ENCODE measurements at regions of chr1 and their contacts with region 1.

Region 1: DNA sequence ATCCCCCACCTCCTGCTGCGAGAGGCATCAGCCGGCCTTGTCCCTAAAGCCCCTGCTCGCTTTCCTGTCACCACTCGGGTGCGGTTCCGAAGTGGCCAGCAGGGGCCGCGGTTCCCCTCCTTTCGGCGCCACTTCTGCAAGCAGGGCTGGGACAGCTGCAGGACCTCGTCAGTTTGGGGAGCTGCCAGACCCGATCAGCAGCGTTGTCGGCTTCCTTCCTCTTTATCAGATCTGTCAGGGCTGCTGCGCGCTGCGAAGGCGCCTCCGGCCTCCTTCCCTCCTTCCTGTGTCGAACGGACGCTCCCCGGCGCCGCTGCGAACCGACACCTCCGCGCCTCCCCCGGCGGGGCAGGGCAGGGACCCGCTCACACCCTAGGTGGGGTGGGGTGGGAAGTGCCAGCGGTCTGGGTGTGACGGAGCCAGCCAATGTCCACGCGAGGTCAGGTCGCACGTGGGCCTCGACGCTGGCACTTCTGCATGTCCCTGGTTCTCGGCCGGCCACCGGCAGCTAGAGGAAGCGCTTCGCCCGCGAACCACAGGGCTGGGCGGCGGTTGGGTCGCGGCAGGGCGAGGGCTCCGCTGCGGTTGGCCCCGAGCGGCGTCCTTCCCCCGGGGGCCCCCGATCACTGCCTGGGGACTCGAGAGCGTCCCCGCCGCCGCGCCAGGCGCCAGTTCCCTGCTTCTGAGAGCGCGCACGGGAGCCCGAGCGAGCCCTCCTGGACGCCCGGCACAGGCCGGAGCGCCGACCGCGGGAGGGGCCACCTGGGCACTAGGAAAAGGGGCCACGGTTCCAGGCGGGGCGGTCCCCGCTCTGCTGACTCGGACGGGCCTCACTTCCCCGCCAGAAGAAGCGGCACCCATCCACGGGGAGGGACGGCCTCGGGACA is 81.8 kb downstream of the RUNX3 start:
- DNase-seq: peak; percentile 93 to 94
- ATAC-seq: peak; percentile 92 to 97 (median 95)
- H3K4me3 ChIP-seq: peak overlapping the region; percentile 13 to 61 (median 56)
- H3K27ac ChIP-seq: peak overlapping the region in 9 of 10 donors; percentile 33 to 86 (median 70)
- H3K4me1 ChIP-seq: peaks cover 0 to 32% (median 17%) of the 10 kb centered on the region in 9 donors
- H3K27me3 ChIP-seq: no peaks in the 10 kb centered on the region
- CTCF ChIP-seq: peak; percentile 86 to 98 (median 93)

Region 2: DNA sequence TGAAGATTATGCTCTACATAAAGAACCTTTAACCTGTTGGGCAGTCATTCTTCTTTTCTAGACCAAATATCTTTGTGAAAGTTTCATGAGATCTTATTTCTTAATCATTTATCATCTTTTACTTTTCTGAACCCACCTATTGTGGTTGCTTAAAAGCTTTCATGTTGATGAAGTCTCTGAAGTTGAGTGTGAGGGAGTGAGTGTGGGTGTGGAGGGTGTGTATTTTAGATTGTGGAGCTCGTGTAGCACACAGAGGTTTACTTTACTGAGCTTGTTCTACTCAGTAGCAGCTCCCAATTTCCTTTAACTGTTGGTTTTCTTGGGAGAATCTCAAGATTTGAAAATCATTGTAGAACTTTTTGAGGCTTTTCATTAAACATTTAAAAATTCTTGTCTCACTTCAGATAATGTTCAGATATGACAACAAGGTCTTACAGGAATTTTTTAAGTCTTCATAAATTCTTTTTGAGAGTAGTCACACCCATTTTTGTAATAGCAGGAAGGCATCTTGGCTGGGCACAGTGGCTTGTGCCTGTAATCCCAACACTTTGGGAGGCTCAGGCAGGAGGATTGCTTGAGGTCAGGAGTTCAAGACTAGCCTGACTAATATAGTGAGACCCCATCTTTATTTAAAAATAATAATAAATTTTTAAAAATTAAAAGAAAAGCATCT is 188.1 kb before region 1 on chr1:
- intact Hi-C with region 1: loop called in 1 of 10 experiments (anchors 10 kb)
- DNase-seq: no peak
- ATAC-seq: no peak
- H3K4me3 ChIP-seq: no peak overlapping the region
- H3K27ac ChIP-seq: no peak overlapping the region
- H3K4me1 ChIP-seq: peaks cover 0 to 5% (median 0%) of the 10 kb centered on the region in 9 donors
- H3K27me3 ChIP-seq: no peaks in the 10 kb centered on the region
- CTCF ChIP-seq: no peak

Region 3: DNA sequence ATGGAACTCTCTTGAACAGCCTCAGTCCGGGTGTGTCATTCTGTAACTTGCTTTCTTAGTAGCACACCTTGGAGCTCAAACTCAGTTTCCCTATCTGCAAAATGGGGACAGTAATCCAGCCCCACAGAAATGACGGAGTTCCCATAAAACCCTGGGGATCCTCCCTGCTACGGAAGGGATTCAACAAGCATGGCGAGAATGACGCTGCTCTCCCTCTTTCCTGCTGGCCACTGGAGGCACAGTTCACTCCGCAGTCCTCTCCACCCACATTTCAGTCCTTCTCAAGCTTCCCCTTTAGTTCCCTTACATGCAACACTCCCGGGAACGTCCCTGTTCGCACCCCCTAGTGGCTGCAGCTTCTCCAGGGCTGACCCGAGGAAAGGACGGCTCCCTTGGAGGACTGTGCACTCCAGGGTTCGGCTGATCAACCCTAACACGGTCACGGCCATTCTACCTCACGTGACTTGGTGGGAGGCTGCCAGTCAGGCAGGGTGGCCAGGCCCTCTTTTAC is 61.2 kb after region 1 on chr1:
- intact Hi-C with region 1: loop called in 2 of 10 experiments (anchors 10 kb)
- DNase-seq: peak; percentile 55
- ATAC-seq: peak; percentile 36 to 68 (median 60)
- H3K4me3 ChIP-seq: no peak overlapping the region
- H3K27ac ChIP-seq: no peak overlapping the region
- H3K4me1 ChIP-seq: peaks cover 0 to 13% (median 0%) of the 10 kb centered on the region in 9 donors
- H3K27me3 ChIP-seq: peaks cover 0 to 15% (median 5%) of the 10 kb centered on the region in 7 donors
- CTCF ChIP-seq: peak in 7 of 9 donors; percentile 28 to 57 (median 43)

Region 4: DNA sequence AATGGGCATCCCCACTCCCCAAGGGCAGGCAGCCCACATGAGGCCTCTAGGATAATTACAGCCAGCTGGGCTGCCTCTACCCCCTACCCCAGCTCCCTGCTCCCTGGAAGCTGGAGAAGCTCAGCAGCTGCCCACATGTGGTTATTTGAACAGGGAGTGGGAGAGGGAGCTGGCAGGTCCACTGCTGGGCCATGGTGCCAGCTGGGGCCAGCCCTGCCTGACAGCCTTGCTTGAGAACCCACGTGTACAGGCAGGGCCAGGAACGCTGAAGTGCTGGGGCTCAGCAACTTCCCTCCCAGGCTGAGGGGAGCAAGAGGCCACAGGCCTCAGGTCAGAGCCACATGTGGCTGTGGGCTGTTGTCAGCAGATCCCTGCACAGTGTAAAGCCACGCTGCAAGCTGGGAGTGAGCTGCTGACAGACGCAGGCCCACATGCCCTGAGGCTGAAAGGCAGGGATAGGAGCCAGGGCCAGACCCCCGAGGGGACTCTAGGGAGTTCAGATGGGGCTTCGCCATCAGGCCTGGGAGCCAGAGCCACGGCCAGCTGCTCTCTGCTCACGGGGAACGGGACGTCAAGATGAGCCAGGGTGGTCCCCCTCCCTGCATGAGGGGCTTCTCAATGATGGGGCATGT is 255.0 kb after region 1 on chr1:
- intact Hi-C with region 1: loop called in 7 of 10 experiments (anchors 2 to 5 kb)
- DNase-seq: no peak
- ATAC-seq: peak in 2 of 8 donors; percentile 21 to 23
- H3K4me3 ChIP-seq: no peak overlapping the region
- H3K27ac ChIP-seq: no peak overlapping the region
- H3K4me1 ChIP-seq: peaks cover 0 to 19% (median 0%) of the 10 kb centered on the region in 9 donors
- H3K27me3 ChIP-seq: peaks cover 0 to 21% (median 10%) of the 10 kb centered on the region in 7 donors
- CTCF ChIP-seq: no peak

Region 5: DNA sequence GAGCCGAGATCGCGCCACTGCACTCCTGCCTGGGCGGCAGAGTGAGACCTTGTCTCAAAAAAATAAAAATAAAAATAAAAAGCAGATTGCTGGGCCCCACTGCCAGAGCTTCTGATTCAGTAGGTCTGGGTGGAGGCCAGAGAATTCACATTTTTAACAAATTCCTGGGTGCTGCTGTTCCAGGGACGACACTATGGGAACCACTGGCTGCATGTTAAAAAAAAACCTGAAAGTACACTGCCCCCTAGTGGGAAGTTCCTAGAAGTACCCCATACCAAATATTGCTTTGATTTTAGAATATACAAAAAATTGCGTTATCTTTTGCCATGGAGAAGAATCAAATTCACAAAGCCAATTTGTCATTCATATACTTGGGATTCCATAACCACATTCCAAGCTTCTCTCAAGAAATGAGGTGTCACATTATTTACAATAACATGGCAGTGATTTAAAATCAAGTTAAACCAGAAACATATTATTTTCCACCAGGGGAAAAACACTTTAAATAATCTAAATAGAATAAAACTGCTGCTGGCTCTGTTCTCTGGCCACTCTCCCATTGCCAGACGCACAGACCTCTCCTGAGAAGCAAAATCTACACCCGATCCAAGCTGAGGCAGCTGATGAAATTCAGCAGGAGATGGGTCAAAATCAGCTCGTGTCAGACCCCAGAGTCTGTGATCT is 356.7 kb after region 1 on chr1:
- intact Hi-C with region 1: loop called in 9 of 10 experiments (anchors 1 to 10 kb)
- DNase-seq: no peak
- ATAC-seq: peak in 1 of 8 donors; percentile 45
- H3K4me3 ChIP-seq: no peak overlapping the region
- H3K27ac ChIP-seq: no peak overlapping the region
- H3K4me1 ChIP-seq: peaks cover 0 to 2% (median 0%) of the 10 kb centered on the region in 9 donors
- H3K27me3 ChIP-seq: peaks cover 0 to 17% (median 2%) of the 10 kb centered on the region in 7 donors
- CTCF ChIP-seq: peak; percentile 60 to 84 (median 80)